ENCODE measurements at regions of chr22 and their contacts with region 1.

Region 1: GRCh38 chr22:32411829-32412592 is at the start of gene RTCB:
- DNase-seq: peak; percentile 95
- ATAC-seq: peak; percentile 83
- H3K4me3 Mint-ChIP-seq: peak within 1 kb of the TSS; percentile 93
- H3K27ac Mint-ChIP-seq: peak within 1 kb of the TSS; percentile 95
- H3K4me1 Mint-ChIP-seq: peaks cover 41% of the 10 kb centered on the region
- H3K27me3 Mint-ChIP-seq: no peaks in the 10 kb centered on the region
- total RNA-seq, gene RTCB: 60.9 to 86.3 TPM

Region 2: DNA sequence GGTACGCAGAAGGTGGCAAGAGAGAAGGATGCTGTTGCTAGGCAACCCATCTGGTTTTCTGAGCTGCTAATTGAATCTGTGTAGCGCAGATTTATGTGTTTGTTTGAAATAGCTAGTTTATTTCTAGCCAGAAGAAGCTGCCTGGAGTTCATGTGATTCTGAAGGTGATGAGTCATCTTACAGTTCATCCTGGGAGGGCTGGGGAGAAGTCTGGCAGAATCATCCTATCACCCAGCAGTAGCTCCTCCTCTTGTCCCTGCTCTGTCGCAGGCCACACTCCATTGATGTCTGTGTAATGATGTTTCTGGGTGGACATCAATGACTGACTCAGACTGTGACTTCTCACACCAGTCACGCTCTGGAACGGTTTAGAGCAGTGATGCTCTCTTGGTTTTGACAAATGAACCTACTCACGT is 57.8 kb after region 1 on chr22:
- CTCF ChIA-PET with region 1: interaction called, 11 read pairs
- POLR2A ChIA-PET with region 1: interaction called, 3 read pairs
- intact Hi-C with region 1: loop called (anchors 1 kb)
- DNase-seq: peak; percentile 10
- ATAC-seq: no peak
- H3K4me3 Mint-ChIP-seq: no peak overlapping the region
- H3K27ac Mint-ChIP-seq: no peak overlapping the region
- H3K4me1 Mint-ChIP-seq: peaks cover 8% of the 10 kb centered on the region
- H3K27me3 Mint-ChIP-seq: peaks cover 9% of the 10 kb centered on the region

Measured in activated CD4-positive, alpha-beta T cell treated with anti-CD3 and anti-CD28 coated beads for 36 hours (primary cell).